ENCODE measurements at regions of chr1 and their contacts with region 1.

Region 1: GRCh38 chr1:54421101-54421504 is 14.9 kb upstream of the SSBP3 start:
- DNase-seq: no peak
- ATAC-seq: no peak
- H3K4me3 ChIP-seq: no peak overlapping the region
- H3K27ac ChIP-seq: no peak overlapping the region
- H3K4me1 ChIP-seq: peaks cover 0 to 10% (median 0%) of the 10 kb centered on the region in 12 donors
- H3K27me3 ChIP-seq: no peaks in the 10 kb centered on the region
- CTCF ChIP-seq: no peak
- POLR2A ChIP-seq: no peak

Region 2: GRCh38 chr1:54464482-54465146 is 43.5 kb after region 1 on chr1:
- intact Hi-C with region 1: loop called in 1 of 10 experiments (anchors 5 kb)
- DNase-seq: no peak
- ATAC-seq: peak in 2 of 4 donors; percentile 18 to 24
- H3K4me3 ChIP-seq: no peak overlapping the region
- H3K27ac ChIP-seq: peak overlapping the region in 3 of 12 donors; percentile 18 to 43 (median 42)
- H3K4me1 ChIP-seq: peaks cover 0 to 35% (median 7%) of the 10 kb centered on the region in 12 donors
- H3K27me3 ChIP-seq: no peaks in the 10 kb centered on the region
- CTCF ChIP-seq: no peak
- POLR2A ChIP-seq: no peak

Region 3: GRCh38 chr1:54474639-54475251 is 53.6 kb after region 1 on chr1:
- intact Hi-C with region 1: loop called in 1 of 10 experiments (anchors 5 kb)
- DNase-seq: peak in 3 of 5 donors; percentile 33 to 45 (median 38)
- ATAC-seq: peak in 3 of 4 donors; percentile 49 to 69 (median 49)
- H3K4me3 ChIP-seq: peak overlapping the region in 11 of 12 donors; percentile 13 to 55 (median 46)
- H3K27ac ChIP-seq: no peak overlapping the region
- H3K4me1 ChIP-seq: peaks cover 0 to 19% (median 5%) of the 10 kb centered on the region in 12 donors
- H3K27me3 ChIP-seq: peaks cover 0 to 27% (median 7%) of the 10 kb centered on the region in 9 donors
- CTCF ChIP-seq: no peak
- POLR2A ChIP-seq: no peak

Region 4: DNA sequence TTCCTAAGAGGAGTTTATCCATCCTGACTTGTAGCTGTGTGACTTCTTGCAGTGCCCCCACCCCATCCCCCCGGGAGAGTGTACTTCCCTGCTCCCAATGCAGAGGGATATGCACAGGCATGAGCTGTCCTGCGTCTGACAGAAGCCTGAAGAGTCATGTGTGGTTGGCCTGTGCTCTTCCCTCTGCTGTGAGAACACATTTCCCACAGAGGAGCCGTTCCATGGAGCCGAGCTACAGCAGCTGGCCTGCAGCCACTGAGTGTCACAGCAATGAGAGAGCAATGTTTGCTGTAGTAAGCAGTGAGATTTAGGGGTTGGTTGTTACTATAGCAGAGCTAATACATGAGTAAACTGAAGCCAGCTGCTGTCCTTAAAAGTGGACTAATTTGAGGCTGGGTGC is 321.2 kb after region 1 on chr1:
- intact Hi-C with region 1: no loop called
- DNase-seq: peak in 1 of 5 donors; percentile 45
- ATAC-seq: peak in 2 of 4 donors; percentile 18 to 57
- H3K4me3 ChIP-seq: no peak overlapping the region
- H3K27ac ChIP-seq: no peak overlapping the region
- H3K4me1 ChIP-seq: no peaks in the 10 kb centered on the region
- H3K27me3 ChIP-seq: no peaks in the 10 kb centered on the region
- CTCF ChIP-seq: no peak
- POLR2A ChIP-seq: no peak